WTC11 (cell line): ENCODE measurements at regions of chr7 and their contacts with region 1.

Region 1: DNA sequence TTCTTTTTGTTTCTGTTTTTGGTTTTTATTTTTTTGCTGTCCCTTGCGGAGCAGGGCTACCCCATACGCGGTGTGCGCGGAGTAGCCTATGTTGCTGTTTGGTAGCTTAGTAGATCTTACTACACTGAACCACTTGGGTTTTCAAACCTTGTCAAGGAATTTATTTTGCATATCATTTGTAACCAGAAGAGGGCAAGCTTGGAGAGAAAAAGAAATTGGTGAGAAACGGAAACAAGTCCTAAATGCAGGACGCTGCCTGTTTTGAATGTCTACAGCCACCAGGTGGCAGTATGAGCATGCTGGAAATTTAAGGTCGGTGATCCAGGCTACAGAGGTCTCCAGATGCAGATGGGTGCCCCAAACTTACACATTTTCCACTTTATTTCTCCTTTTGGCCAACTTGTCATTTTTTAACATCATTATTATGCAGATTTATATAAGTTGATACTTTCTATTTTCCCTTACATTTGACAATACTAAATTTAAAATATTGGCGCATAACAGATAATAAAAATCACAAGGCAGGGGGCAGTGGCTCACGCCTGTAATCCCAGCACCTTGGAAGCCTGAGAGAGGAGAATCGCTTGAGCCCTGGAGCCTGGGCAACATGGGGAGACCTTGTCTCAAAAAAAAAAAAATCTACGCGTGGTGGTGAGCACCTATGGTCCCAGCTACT is 15.3 kb upstream of the TRA2A start:
- DNase-seq: peak; percentile 78
- ATAC-seq: peak; percentile 89
- H3K4me3 Mint-ChIP-seq: no peak overlapping the region
- H3K27ac Mint-ChIP-seq: no peak overlapping the region
- H3K4me1 Mint-ChIP-seq: peaks cover 2% of the 10 kb centered on the region
- H3K27me3 Mint-ChIP-seq: no peaks in the 10 kb centered on the region
- CTCF ChIP-seq: peak; percentile 82

Region 2: DNA sequence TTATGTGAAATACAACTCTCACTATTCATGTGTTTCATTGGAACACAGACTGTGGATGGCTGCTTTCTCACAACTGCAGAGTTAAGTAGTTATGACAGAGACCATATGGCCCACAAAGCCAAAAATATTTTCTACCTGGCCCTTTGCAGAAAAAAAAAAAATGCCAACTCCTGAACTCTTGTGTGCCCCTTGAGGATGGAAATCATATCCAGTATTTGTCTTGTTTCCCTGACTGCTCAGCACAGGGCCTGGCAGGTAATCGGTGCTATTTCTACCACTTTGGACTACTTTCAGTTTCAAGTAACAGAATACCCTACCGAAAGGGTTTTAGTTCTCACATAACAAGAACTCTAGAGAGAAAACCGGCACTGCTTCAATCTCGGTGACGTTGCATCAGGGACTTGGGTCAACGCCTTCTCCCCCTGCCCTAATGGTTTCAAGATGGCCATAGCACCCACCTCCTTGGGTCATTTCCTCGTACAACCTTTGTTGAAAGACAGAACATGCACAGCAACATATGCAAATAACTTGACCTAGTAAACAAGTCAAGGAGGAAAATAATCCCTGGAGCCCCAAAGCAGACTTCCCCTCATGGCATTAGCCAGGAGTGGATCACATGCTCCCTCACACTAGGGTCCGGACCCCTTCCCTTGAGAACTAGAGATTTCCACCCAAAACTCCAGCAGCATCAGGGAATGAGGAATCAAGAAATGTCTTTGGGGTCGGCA is 312.3 kb before region 1 on chr7:
- CTCF ChIA-PET with region 1: no interaction called
- POLR2A ChIA-PET with region 1: no interaction called
- DNase-seq: no peak
- ATAC-seq: no peak
- H3K4me3 Mint-ChIP-seq: no peak overlapping the region
- H3K27ac Mint-ChIP-seq: no peak overlapping the region
- H3K4me1 Mint-ChIP-seq: peaks cover 12% of the 10 kb centered on the region
- H3K27me3 Mint-ChIP-seq: no peaks in the 10 kb centered on the region
- CTCF ChIP-seq: no peak

Region 3: GRCh38 chr7:23273141-23273599 is 273.9 kb before region 1 on chr7:
- CTCF ChIA-PET with region 1: interaction called, 12 read pairs
- POLR2A ChIA-PET with region 1: no interaction called
- DNase-seq: peak; percentile 95
- ATAC-seq: peak; percentile 94
- H3K4me3 Mint-ChIP-seq: peak overlapping the region; percentile 56
- H3K27ac Mint-ChIP-seq: peak overlapping the region; percentile 76
- H3K4me1 Mint-ChIP-seq: peaks cover 4% of the 10 kb centered on the region
- H3K27me3 Mint-ChIP-seq: no peaks in the 10 kb centered on the region
- CTCF ChIP-seq: peak; percentile 87

Region 4: DNA sequence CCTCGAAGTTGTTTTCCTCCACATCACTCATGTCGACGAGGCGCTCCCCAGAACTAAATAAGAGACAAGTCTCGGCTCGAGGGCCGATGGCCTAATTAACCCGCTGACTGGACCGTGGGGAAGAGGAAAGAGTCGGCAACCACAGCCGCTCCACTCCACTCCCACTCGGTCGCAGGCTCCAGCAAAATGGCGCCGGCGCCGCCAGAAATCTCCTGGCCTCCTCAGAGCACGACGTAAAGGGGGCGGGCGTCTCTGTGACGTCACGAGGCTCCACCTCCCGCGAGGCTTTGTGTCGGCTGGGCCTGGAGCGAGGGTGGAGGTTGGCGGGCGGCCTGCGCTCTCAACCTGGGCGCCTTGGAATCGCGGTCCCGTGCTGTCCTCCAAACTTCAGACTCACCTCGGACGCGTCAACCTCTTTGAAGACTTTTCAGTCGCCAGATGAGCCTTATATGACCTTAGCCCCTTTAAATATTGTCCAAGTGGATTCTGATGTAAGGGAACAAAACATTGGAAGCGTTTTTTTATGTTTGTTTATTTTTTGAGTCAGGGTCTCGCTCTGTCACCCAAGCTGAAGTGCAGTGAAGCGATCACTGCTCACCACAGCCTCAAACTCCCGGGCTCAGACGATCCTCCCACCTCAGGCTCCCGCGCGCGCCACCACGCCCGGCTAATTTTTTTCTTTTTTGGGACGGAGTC is 15.1 kb before region 1 on chr7 and contains the start of gene TRA2A:
- CTCF ChIA-PET with region 1: interaction called, 13 read pairs
- POLR2A ChIA-PET with region 1: no interaction called
- DNase-seq: peak; percentile 98
- ATAC-seq: peak; percentile 86
- H3K4me3 Mint-ChIP-seq: peak within 1 kb of the TSS; percentile 100
- H3K27ac Mint-ChIP-seq: peak within 1 kb of the TSS; percentile 100
- H3K4me1 Mint-ChIP-seq: peaks cover 47% of the 10 kb centered on the region
- H3K27me3 Mint-ChIP-seq: no peaks in the 10 kb centered on the region
- CTCF ChIP-seq: no peak
- total RNA-seq, gene TRA2A: 110 to 144 TPM (median 133 TPM) in 3 replicates

Region 5: DNA sequence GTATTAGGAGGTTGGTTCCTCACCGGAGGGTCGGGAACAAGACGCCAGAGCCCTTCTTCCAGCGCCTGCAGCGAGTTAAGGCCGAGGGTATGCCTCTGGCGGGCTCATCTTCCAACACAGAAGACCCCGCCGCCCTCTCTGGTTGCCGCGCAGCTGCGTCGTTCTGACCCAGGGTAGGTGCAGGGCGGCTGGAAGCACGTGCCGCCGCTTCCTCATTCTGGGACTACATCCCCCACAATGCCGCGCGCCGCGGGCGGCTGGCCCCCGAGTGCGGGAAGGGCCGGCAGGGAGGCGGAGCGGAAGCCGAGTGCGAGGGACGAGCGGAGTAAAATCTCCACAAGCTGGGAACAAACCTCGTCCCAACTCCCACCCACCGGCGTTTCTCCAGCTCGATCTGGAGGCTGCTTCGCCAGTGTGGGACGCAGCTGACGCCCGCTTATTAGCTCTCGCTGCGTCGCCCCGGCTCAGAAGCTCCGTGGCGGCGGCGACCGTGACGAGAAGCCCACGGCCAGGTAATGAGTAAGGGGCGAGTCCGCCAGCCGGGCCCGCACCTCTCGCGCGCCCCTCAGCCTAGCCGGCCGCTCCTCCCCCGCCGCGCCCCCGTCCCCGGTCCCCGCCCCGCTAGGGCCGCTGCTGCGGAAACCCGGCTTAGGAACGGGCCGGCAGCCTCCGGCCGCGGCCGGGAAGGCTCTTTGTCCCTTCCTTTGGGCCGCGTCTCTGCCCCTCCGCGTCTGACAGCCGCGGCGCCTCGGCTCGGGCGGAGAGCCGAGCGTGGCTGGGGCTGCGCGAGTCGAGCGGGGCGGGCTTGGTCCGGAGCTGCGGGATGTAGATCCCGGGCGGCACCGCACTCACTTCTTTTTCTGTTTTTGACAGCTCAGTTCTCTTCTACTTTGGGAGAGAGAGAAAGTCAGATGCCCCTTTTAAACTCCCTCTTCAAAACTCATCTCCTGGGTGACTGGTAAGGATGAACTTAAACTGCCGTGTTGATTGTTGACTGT is 50.4 kb after region 1 on chr7 and contains the start of gene CCDC126:
- CTCF ChIA-PET with region 1: interaction called, 14 read pairs
- POLR2A ChIA-PET with region 1: no interaction called
- DNase-seq: peak; percentile 97
- ATAC-seq: peak; percentile 91
- H3K4me3 Mint-ChIP-seq: peak within 1 kb of the TSS; percentile 93
- H3K27ac Mint-ChIP-seq: peak within 1 kb of the TSS; percentile 88
- H3K4me1 Mint-ChIP-seq: peaks cover 24% of the 10 kb centered on the region
- H3K27me3 Mint-ChIP-seq: peaks cover 29% of the 10 kb centered on the region
- CTCF ChIP-seq: no peak
- total RNA-seq, gene CCDC126: 3.3 to 5.1 TPM (median 3.8 TPM) in 3 replicates

Region 6: GRCh38 chr7:23712368-23713284 is 165.6 kb after region 1 on chr7:
- CTCF ChIA-PET with region 1: interaction called, 13 read pairs
- POLR2A ChIA-PET with region 1: no interaction called
- DNase-seq: no peak
- ATAC-seq: no peak
- H3K4me3 Mint-ChIP-seq: no peak overlapping the region
- H3K27ac Mint-ChIP-seq: no peak overlapping the region
- H3K4me1 Mint-ChIP-seq: no peaks in the 10 kb centered on the region
- H3K27me3 Mint-ChIP-seq: peaks cover 5% of the 10 kb centered on the region; the same call in 1 of the 2 replicates
- CTCF ChIP-seq: peak; percentile 35